Breast epithelium (tissue), 4 donors: ENCODE measurements at regions of chr2 and their contacts with region 1.

Region 1: DNA sequence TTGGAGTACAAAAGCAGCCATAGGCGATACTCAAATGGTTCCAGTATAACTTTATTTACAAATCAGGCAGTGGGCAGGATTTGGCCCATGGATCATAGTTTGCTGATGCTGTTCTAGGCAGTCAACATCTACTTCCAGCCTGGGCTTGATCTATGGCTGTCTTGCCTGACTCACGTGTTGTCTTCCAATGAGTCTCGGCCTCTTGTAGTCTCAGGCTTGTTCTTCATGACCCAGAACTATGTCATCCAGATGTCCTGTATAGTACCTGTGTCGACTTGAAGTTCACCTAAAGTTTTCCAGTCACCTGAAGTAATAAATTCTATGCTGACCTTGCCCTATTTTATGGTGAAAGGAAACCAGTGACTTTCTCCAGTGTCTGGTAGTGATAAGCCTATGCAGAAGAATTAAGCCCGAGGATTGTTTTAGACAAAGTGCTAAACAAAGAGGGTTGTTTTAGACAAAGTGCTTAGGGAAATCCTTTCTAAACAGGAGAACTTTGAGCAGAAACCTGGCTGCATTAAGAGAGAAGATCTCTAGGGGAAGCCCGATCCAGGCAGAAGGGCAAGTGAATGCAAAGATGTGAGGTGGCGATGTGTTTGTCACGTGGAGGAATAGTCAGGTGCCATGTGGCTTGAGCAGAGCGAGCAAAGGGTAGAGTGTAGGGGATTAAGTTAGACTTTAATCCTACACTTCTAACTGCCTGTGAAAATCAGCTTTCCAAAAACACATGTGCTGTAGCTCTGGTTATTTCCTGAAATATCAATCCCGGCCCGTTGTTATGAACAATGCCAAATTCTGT is 8.5 kb upstream of the THNSL2 start:
- DNase-seq: no peak
- H3K4me3 ChIP-seq: no peak overlapping the region
- H3K27ac ChIP-seq: no peak overlapping the region
- H3K4me1 ChIP-seq: no peaks in the 10 kb centered on the region
- H3K27me3 ChIP-seq: no peaks in the 10 kb centered on the region
- CTCF ChIP-seq: no peak
- POLR2A ChIP-seq: no peak

Region 2: DNA sequence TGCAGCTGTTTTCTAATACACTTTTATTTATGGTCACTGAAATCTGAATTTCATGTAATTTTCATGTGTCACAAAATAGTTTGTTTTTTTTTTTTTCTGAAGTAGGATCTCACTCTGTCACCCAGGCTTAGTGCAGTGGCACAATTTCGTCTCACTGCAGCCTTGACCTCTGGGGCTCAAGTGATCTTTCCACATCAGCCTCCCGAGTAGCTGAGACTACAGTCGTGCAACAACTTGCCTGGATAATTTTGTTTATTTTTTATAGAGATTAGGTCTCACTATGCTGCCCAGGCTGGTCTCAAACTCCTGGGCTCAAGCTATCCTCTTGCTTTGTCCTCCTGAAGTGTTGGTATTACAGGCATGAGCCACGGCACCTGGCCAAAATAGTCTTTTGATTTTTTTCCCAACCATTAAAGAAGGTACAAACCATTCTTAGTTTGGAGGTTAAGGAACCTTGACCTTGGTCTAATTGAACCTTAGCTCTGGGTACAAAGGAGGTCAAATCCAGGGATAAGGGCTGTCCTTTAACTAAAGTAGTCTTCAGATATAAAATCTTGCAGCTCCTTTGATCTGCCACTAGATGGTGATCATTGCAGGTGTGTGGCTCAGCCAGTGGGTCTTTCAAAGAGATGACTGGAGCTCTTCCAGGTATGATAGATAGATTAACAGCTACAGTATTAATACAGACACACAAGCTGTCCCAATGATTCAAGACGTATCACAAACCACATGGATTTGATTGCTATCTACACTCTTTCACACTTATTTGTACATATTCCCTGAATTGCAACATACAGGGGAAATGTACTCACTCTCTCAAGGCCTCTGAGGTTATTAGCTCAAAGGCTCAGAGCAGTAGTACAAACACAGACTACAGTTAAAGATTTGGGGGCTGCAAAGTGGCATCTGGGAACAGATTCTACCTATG is 101.4 kb before region 1 on chr2:
- intact Hi-C with region 1: loop called (anchors 2 kb)
- DNase-seq: no peak
- H3K4me3 ChIP-seq: no peak overlapping the region
- H3K27ac ChIP-seq: no peak overlapping the region
- H3K4me1 ChIP-seq: no peaks in the 10 kb centered on the region
- H3K27me3 ChIP-seq: no peaks in the 10 kb centered on the region
- CTCF ChIP-seq: peak; percentile 41 to 71 (median 67)
- POLR2A ChIP-seq: no peak

Region 3: DNA sequence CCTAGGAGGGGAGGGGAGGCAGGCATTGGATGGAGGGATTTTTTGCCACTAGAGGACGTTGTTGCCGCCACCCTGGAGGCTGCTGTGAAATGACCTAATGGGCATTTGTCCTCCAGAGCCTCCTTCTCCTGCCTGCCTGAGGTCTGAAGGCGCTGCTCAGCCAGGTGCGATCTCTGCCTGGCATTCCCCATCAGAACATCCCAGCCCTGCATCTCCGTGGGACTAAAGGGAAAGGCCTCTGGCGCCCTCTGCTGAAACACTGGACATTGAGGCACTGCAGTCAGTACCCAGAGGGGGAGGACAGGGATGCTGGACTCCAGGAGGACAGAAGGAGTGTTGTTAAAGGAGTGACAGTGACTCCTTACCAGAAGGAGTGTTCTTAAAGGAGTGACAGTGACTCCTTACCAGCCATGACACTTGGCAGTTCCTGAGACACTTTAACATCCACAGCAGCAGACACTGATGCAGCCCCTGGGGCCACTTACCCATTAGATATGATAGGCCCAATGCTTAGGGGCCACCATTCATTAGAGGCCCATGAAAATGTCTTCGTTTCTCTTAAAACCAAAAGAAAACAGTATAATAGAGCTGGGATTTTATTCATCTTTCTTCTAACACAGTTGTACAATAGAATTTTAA is 25.5 kb after region 1 on chr2:
- intact Hi-C with region 1: no loop called
- DNase-seq: peak in 1 of 2 donors; percentile 35
- H3K4me3 ChIP-seq: no peak overlapping the region
- H3K27ac ChIP-seq: no peak overlapping the region
- H3K4me1 ChIP-seq: no peaks in the 10 kb centered on the region
- H3K27me3 ChIP-seq: no peaks in the 10 kb centered on the region
- CTCF ChIP-seq: peak in 2 of 3 donors; percentile 33 to 45
- POLR2A ChIP-seq: no peak